ENCODE measurements at regions of chr1 and their contacts with region 1.

Region 1: DNA sequence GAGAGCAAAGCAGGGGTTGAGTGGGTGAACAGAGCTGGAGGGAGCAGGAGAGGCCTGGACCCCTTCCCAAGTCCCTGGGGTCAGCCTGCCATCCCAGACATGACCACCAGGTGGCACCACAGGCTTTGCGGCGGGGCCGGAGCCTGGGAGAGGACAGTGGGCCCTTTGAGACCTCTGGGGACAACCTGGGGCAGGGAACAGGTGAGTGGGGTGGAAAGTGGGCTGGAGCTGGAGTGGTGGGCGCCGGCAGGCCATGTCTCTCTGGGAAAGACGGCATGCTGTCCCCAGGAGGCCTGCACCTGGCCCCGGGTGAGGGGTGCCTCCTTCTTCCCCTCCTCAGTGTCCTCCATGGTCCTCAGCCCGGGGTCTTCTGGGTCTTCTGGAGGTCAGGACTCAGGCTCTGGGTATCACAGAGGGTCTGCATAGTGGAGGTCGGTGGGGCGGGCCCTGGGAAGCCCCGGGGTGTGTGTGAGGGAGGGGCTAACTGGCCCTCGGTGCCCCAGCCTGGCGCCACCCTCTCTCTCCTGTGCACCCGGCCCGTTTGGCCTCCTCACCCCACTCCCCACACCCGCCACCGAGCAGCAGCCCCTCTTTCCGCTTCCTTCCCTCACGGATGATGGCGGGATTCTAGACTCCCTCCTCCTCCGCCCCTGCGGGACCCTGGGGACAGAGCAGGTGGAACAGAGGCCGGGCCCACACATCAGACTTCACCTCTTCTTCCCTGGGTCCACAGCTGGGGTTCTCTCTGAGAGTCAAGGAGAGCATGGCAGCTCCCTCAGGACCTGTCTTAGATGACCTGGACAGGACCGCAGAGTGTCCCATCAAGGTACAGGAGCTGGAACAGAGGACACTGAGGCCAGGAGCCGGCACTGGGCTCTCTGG is 28.4 kb upstream of the PKP1 start:
- DNase-seq: peak; percentile 68 to 83
- ATAC-seq: peak; percentile 88 to 94 (median 90)
- H3K4me3 ChIP-seq: no peak overlapping the region
- H3K27ac ChIP-seq: no peak overlapping the region
- H3K4me1 ChIP-seq: no peaks in the 10 kb centered on the region
- H3K27me3 ChIP-seq: peaks cover 0 to 7% (median 0%) of the 10 kb centered on the region in 3 donors
- CTCF ChIP-seq: peak; percentile 97

Region 2: GRCh38 chr1:201309426-201309825 is 54.6 kb after region 1 on chr1:
- intact Hi-C with region 1: loop called in 1 of 2 experiments (anchors 5 kb)
- DNase-seq: peak; percentile 83 to 92
- ATAC-seq: peak; percentile 84 to 97 (median 95)
- H3K4me3 ChIP-seq: no peak overlapping the region
- H3K27ac ChIP-seq: peak overlapping the region; percentile 61
- H3K4me1 ChIP-seq: peaks cover 6% of the 10 kb centered on the region
- H3K27me3 ChIP-seq: peaks cover 0 to 9% (median 0%) of the 10 kb centered on the region in 3 donors
- CTCF ChIP-seq: no peak

Region 3: DNA sequence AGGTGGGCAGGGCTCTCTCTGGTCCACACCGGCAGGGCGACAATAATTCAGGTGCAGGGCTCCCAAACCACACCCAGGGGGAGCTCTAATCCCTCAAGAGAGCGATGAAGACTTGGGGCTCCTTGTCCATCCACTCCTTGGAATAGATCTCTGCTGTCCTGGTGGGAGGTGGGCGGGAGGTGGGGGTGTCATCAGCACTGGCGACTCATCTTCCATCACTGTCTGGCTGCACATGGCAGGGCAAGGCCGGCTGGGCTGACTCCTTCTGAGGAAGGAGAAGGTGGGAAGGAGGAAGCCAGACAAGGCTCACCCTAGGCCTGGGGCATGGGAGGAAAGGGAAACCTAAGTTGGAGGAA is 93.3 kb after region 1 on chr1:
- intact Hi-C with region 1: loop called in 1 of 2 experiments (anchors 5 kb)
- DNase-seq: no peak
- ATAC-seq: peak; percentile 60 to 71 (median 70)
- H3K4me3 ChIP-seq: no peak overlapping the region
- H3K27ac ChIP-seq: no peak overlapping the region
- H3K4me1 ChIP-seq: no peaks in the 10 kb centered on the region
- H3K27me3 ChIP-seq: no peaks in the 10 kb centered on the region
- CTCF ChIP-seq: peak; percentile 35

Region 4: GRCh38 chr1:201361652-201362504 is 107.0 kb after region 1 on chr1:
- intact Hi-C with region 1: loop called (anchors 1 to 2 kb)
- DNase-seq: peak; percentile 52 to 65
- ATAC-seq: peak; percentile 75 to 89 (median 82)
- H3K4me3 ChIP-seq: no peak overlapping the region
- H3K27ac ChIP-seq: no peak overlapping the region
- H3K4me1 ChIP-seq: no peaks in the 10 kb centered on the region
- H3K27me3 ChIP-seq: no peaks in the 10 kb centered on the region
- CTCF ChIP-seq: peak; percentile 84

Region 5: DNA sequence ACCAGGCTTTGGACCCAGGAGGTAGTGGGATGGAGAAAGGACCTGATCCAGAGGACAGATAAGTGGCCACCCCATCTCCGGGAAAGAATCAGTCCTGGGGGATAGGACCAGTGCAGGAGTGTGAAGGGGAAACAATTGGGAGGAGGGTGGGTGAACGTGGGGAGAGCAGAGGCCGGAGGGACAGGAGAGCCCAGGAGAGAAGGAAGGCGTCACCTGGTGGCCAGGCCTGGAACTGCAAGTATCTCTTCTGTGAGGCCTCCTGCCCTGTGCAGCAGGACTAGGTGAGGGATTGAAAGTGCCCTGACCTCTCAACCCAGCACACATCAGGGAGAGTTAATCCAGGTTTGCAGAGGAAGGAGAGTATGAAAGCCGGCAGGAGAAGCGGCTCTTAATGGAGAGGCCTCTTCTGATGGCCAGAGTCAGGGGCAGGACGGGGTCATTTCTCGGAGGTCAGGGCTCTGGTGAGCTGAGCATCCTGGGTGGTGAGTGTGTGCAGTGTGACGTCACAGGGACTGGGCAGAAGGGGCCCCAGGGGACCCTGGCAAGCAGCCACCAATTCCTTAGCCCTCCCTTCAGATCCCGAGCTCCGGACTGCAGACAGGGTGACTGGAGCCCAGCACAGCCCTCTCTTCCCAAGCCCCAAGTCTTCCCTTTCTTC is 153.4 kb after region 1 on chr1:
- intact Hi-C with region 1: loop called in 1 of 2 experiments (anchors 1 kb)
- DNase-seq: peak; percentile 82 to 89
- ATAC-seq: peak; percentile 73 to 85 (median 78)
- H3K4me3 ChIP-seq: no peak overlapping the region
- H3K27ac ChIP-seq: peak overlapping the region; percentile 41
- H3K4me1 ChIP-seq: no peaks in the 10 kb centered on the region
- H3K27me3 ChIP-seq: no peaks in the 10 kb centered on the region
- CTCF ChIP-seq: peak; percentile 95

Region 6: GRCh38 chr1:201511941-201512539 is 257.2 kb after region 1 on chr1:
- intact Hi-C with region 1: loop called in 1 of 2 experiments (anchors 10 kb)
- DNase-seq: peak; percentile 63 to 77
- ATAC-seq: peak; percentile 41 to 59 (median 52)
- H3K4me3 ChIP-seq: no peak overlapping the region
- H3K27ac ChIP-seq: peak overlapping the region; percentile 60
- H3K4me1 ChIP-seq: peaks cover 12% of the 10 kb centered on the region
- H3K27me3 ChIP-seq: no peaks in the 10 kb centered on the region
- CTCF ChIP-seq: no peak